ENCODE measurements at regions of chr15 and their contacts with region 1.

Region 1: DNA sequence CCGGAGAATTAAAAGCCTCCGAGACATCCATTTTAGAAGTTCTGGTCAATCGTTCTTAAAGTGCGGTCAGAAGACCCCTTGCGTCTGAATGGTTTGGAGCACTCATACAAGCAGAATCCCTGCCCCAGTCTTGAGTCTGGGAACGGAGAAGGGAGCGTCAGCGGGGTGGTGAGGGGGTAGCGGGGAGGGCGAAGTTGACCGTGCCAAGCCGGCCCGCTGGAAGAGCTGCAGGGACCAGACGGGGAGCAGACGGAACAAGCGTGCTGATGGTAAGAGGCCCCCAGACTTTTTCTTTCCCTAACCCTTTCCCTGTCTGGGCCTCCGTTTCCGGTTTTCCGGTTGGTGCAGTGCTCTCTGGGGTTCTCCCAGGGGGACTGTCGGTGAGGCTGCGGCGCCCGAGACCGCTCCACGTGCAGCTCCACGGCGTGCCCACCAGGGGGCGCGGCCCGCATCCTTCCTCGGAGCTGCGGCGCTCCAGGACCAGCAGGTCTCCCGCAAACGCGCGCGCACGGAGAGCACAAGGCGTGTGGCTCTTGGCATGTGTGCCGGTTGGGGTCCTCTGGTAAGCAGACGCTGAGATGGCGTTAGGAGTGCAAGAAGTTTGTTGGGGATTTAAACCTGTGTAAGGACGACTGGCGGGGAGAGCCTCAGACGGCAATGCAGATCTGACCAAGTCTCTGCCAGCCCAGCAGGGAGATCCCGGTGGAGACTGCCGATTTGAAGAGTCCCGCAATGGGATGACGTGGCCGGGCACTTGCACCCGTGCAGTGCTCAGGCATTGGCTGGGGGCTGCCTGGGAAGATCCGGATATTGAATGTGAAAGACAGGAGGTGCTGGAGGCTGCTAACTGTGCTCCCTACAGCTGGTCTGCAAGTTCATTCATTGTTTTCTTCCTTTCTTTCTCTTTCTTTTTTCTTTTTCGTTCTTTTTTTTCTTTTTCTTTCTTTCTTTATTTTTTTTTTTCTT is 19.2 kb upstream of the CORO2B start:
- DNase-seq: peak; percentile 67
- H3K4me3 Mint-ChIP-seq: peak overlapping the region; percentile 70
- H3K27ac Mint-ChIP-seq: no peak overlapping the region
- H3K4me1 Mint-ChIP-seq: peaks cover 6% of the 10 kb centered on the region
- H3K27me3 Mint-ChIP-seq: no peaks in the 10 kb centered on the region
- CTCF ChIP-seq: peak; percentile 94

Region 2: GRCh38 chr15:68517285-68517761 is 42.3 kb before region 1 on chr15:
- CTCF ChIA-PET with region 1: no interaction called
- POLR2A ChIA-PET with region 1: no interaction called
- intact Hi-C with region 1: no loop called
- DNase-seq: no peak
- H3K4me3 Mint-ChIP-seq: no peak overlapping the region
- H3K27ac Mint-ChIP-seq: no peak overlapping the region
- H3K4me1 Mint-ChIP-seq: peaks cover 9% of the 10 kb centered on the region
- H3K27me3 Mint-ChIP-seq: peaks cover 10% of the 10 kb centered on the region
- CTCF ChIP-seq: no peak

Region 3: GRCh38 chr15:68571582-68571981 is 12.0 kb after region 1 on chr15:
- CTCF ChIA-PET with region 1: interaction called, 21 read pairs
- POLR2A ChIA-PET with region 1: no interaction called
- intact Hi-C with region 1: no loop called
- DNase-seq: no peak
- H3K4me3 Mint-ChIP-seq: no peak overlapping the region
- H3K27ac Mint-ChIP-seq: no peak overlapping the region
- H3K4me1 Mint-ChIP-seq: no peaks in the 10 kb centered on the region
- H3K27me3 Mint-ChIP-seq: peaks cover 14% of the 10 kb centered on the region
- CTCF ChIP-seq: no peak

Measured in MCF 10A (cell line).